CD8-positive, alpha-beta memory T cell (primary cell): ENCODE measurements at regions of chr6 and their contacts with region 1.

Region 1: GRCh38 chr6:28969129-28969528 is 36.0 kb downstream of the ZNF311 start:
- DNase-seq: no peak
- H3K4me3 ChIP-seq: no peak overlapping the region
- H3K4me3 Mint-ChIP-seq: no peak overlapping the region
- H3K27ac ChIP-seq: no peak overlapping the region
- H3K27ac Mint-ChIP-seq: peak overlapping the region in 1 of 8 donors; percentile 15
- H3K4me1 ChIP-seq: no peaks in the 10 kb centered on the region
- H3K4me1 Mint-ChIP-seq: no peaks in the 10 kb centered on the region
- H3K27me3 ChIP-seq: no peaks in the 10 kb centered on the region
- H3K27me3 Mint-ChIP-seq: peaks cover 12 to 14% of the 10 kb centered on the region in 2 donors

Region 2: DNA sequence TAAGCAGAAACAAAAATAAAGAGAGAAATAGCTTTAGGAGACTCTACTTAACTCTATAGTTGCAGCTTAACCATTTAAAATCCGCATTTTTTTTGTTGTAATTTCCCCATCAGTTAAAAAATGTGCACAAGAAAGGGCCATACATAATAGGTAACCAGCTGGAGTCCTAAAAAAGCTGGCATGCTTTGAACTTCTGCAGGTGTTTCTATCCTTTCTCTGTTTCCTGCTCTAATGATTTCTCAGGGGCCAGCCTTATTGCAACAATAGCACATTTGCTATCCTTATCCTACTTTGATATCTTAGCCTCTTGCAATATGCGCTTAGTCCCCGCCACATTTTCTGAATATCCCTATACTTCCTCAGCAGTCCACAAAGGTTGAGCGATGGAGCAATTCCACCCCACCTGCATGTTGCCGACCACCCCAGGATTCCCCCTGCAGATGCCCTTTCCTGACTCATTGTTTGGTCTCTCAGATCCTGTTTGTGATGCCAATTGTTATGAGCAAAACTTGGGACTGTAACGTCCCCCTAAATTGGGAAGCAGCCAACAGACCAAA is 93.9 kb before region 1 on chr6:
- CTCF ChIA-PET with region 1: no interaction called
- POLR2A ChIA-PET with region 1: interaction called, 10 read pairs
- DNase-seq: no peak
- H3K4me3 ChIP-seq: no peak overlapping the region
- H3K4me3 Mint-ChIP-seq: no peak overlapping the region
- H3K27ac ChIP-seq: peak overlapping the region; percentile 1
- H3K27ac Mint-ChIP-seq: no peak overlapping the region
- H3K4me1 ChIP-seq: no peaks in the 10 kb centered on the region
- H3K4me1 Mint-ChIP-seq: peaks cover 0 to 7% (median 0%) of the 10 kb centered on the region in 3 donors
- H3K27me3 ChIP-seq: no peaks in the 10 kb centered on the region
- H3K27me3 Mint-ChIP-seq: peaks cover 11 to 16% of the 10 kb centered on the region in 2 donors